SK-N-SH (cell line): ENCODE measurements at regions of chr12 and their contacts with region 1.

Region 1: DNA sequence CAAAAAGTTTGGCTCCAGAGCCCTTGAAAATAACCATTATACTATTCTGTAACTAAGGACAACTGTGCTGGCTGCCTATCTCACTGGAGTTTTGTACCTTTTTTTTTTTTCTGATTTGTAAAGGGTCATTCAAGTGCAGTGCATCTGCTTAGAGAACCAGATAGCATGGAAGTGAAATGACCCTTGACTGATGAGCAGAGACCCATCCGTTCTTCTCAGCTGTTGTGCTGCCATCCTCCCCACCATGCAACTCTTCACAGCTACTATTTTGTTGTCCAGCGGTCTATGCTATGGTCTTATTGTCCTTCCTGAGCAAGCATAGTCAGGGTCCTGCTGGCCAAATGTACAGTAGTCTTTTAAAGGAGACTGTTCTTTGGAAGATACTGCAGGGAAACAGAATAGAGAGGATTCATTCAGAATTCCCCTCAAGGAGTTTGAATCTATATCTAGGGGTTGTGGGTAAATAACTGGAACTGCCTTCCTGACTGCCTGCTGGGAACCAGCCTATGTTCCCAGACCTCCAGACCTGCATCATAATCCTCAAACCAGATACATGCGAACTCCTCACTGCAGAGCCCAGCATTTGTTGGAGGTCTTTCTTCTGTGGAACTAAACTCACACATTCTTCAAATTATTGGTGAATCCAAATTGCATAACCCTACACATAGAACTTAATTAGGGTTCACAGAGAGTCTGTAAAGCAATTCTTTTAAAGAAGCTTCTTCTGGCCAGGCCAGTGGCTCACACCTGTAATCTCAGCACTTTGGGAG is 41.1 kb downstream of the GPR19 start:
- DNase-seq: no peak
- H3K4me3 ChIP-seq: no peak overlapping the region
- H3K27ac ChIP-seq: no peak overlapping the region
- H3K4me1 ChIP-seq: peaks cover 0 to 3% of the 10 kb centered on the region in 2 experiments; a peak in 2 of 4 replicates
- H3K27me3 ChIP-seq: no peaks in the 10 kb centered on the region
- CTCF ChIP-seq: no peak
- EP300 ChIP-seq: no peak
- RAD21 ChIP-seq: no peak

Region 2: DNA sequence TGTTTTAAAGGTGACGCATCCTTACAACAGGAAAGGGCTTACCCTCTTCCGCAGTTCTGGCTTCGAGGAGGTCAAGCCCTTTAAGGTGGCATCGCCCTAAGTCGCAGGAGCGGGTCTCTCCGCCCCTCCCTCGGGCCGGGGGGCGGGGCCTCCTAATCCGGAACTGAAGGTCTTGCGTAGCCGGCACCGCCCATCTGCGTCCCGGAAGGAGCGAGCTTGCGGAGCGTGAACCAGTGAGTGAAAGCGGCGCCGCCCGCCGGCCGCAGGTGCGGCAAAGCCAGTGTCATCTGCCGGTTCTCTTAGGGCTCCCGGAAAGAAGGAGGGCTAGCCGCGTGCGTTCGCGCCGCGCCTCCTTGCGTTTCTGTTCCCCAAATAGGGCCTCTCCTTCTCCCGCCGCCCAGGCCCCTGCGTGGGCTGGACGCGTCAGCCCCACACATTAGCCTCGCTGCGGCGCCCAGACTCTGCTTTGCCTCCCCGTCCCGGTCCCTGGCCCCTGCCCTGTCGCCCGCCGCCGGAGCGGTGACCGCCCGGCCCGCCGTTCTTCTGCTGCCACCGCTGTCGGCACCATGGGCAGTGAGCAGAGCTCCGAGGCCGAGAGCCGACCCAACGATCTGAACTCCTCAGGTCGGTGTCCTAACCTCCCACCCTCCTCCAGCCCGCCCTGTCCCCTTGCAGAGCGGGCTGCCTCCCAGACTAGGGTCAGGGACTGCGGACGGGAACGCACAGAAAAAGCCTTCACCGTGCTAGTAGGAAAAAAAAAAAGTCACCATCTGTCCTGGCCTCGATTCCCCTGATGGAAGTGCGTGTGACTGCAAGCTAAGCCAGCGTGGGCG is 297.8 kb before region 1 on chr12 and contains the start of gene BORCS5:
- CTCF ChIA-PET with region 1: interaction called, 12 read pairs
- POLR2A ChIA-PET with region 1: no interaction called
- DNase-seq: peak; percentile 95
- H3K4me3 ChIP-seq: peak within 1 kb of the TSS; percentile 83 to 87
- H3K27ac ChIP-seq: peak within 1 kb of the TSS; percentile 76 to 91
- H3K4me1 ChIP-seq: peaks cover 0 to 9% of the 10 kb centered on the region in 2 experiments; a peak in 2 of 4 replicates
- H3K27me3 ChIP-seq: no peaks in the 10 kb centered on the region
- CTCF ChIP-seq: peak; percentile 34
- EP300 ChIP-seq: 0 out of 4 replicates have a peak, but pooled peaks of 1 of the 2 experiments have one; percentile 7
- RAD21 ChIP-seq: no peak
- polyA plus RNA-seq, gene BORCS5: 13.6 and 16.3 TPM in 2 replicates

Region 3: GRCh38 chr12:12384571-12385340 is 270.1 kb before region 1 on chr12:
- CTCF ChIA-PET with region 1: interaction called, 10 read pairs
- POLR2A ChIA-PET with region 1: no interaction called
- DNase-seq: peak; percentile 45
- H3K4me3 ChIP-seq: no peak overlapping the region
- H3K27ac ChIP-seq: peak overlapping the region in 1 of 2 experiments; percentile 65; a peak in 2 of 4 replicates
- H3K4me1 ChIP-seq: peaks cover 10 to 17% of the 10 kb centered on the region in 2 experiments; a peak in 3 of 4 replicates
- H3K27me3 ChIP-seq: no peaks in the 10 kb centered on the region
- CTCF ChIP-seq: no peak
- EP300 ChIP-seq: no peak
- RAD21 ChIP-seq: no peak

Region 4: DNA sequence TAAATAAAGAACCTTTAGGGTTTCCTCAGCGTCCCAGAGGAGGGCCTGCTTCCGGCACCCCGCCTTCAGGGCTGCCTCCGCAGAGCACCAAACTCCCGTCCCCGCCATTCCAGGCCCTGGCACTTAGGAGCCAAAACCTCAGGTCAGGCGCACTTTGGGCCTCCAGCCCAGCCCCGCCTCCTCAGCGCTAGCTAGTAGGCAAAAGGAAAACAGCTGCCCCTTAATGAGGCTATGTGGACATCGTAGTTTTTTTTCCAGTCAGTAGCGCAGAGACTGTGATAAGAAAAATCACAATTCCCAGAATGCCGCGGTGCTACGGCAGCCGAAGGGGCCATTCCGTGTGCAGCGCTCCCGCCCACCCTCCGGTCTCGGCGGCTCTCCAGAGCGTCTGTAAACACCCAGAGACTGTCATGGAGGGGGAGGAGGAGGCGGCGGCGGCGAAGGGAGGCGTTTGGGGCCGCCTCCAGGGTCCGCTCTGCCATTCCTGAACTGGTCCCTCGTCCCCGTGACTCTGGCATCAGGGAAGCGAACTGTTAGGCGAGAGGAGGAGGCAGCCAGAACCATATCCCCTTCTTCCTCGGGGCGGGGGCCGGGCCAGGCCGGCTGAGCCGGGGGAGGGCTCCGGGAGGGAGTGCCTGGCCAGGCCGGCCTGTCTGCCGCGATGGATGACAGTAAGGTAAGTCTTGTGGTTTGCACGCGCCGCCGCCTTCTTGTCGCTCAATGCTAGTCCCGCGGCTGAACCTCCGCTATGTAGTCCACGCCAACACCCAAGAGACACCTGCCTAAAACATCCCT is 43.2 kb before region 1 on chr12 and contains the start of gene CREBL2:
- CTCF ChIA-PET with region 1: interaction called, 15 read pairs
- POLR2A ChIA-PET with region 1: interaction called, 3 read pairs
- DNase-seq: peak; percentile 93
- H3K4me3 ChIP-seq: peak within 1 kb of the TSS; percentile 68 to 75
- H3K27ac ChIP-seq: peak within 1 kb of the TSS; percentile 89 to 91
- H3K4me1 ChIP-seq: peaks cover 6% of the 10 kb centered on the region in 2 experiments; a peak in 2 of 4 replicates
- H3K27me3 ChIP-seq: no peaks in the 10 kb centered on the region
- CTCF ChIP-seq: no peak
- EP300 ChIP-seq: peak; percentile 29 to 56; a peak in 2 of 4 replicates
- RAD21 ChIP-seq: no peak
- polyA plus RNA-seq, gene CREBL2: 12.6 and 16.2 TPM in 2 replicates

Region 5: GRCh38 chr12:12704593-12705230 is 49.8 kb after region 1 on chr12:
- CTCF ChIA-PET with region 1: interaction called, 16 read pairs
- POLR2A ChIA-PET with region 1: no interaction called
- DNase-seq: peak; percentile 78
- H3K4me3 ChIP-seq: peak overlapping the region in 1 of 2 experiments; percentile 28; a peak in 1 of 4 replicates
- H3K27ac ChIP-seq: no peak overlapping the region
- H3K4me1 ChIP-seq: no peaks in the 10 kb centered on the region
- H3K27me3 ChIP-seq: no peaks in the 10 kb centered on the region
- CTCF ChIP-seq: peak; percentile 100
- EP300 ChIP-seq: peak in 1 of 2 experiments; percentile 62; a peak in 2 of 4 replicates
- RAD21 ChIP-seq: peak; percentile 100

Region 6: DNA sequence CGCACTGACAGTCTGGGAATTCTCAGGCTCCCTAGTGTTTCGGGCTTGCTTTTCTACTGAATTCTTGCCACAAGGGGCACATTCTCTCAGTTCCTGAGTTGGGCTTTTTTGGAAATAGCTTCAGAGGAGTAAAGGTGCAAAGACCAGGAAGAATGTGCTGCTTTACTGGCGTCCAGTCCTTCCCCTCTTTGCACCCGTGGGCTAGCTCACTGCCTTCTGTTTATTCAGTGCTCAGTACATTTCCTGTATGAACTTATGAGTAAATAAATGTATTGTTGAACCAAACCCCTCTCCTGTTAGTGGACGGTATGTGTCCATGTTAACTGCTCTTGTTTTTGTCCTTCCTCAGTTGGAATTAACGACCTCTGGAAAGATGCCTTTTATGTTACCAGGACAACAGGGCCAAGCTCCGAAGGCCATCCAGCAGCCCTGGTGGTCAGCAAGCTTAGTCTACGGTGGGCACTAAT is 424.6 kb after region 1 on chr12:
- CTCF ChIA-PET with region 1: no interaction called
- POLR2A ChIA-PET with region 1: no interaction called
- DNase-seq: no peak
- H3K4me3 ChIP-seq: no peak overlapping the region
- H3K27ac ChIP-seq: no peak overlapping the region
- H3K4me1 ChIP-seq: 0 out of 4 replicates have a peak, but pooled peaks cover 0 to 5% of the 10 kb centered on the region in 2 experiments
- H3K27me3 ChIP-seq: no peaks in the 10 kb centered on the region
- CTCF ChIP-seq: no peak
- EP300 ChIP-seq: no peak
- RAD21 ChIP-seq: no peak